ENCODE measurements at regions of chr1 and their contacts with region 1.

Region 1: DNA sequence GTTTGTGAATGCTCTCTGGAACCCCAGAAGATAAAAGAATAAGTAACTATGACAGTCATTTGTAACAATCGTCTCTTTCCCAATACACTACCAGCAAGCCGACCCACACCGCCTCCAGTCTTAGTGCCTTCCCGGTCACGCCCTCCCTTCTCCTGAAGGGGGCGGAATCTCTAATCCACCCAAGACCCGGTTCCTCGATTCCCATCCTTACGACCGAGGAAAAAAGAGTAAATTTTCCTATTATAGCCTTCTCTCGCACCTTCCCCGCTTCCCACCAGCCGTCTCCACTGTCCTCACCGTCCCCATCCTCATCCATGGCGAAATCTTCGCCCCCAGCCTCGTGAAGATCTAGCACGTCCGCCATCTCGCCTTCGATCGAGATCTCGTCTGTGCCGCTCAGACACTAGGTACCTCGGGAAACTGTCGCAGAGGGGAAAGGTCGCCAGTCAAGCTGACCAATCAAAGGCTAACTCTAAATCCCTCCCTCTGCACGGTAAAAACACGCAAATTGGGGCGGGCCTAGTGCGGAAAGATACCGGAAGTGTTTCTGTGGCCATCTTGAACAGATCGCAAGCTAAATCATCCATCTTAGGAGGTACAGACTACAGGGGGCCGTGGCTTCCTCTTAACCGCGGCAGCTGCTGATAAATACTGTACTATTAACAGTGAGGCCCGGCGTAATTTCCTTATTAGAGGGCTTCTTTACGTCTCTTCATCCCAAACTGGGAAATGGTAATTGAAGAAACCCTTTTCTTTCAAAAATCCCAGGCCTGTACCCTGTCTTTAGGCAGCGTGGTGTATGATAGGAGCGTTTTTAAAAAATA is at the start of gene RBM8A:
- DNase-seq: peak; percentile 97
- H3K4me3 Mint-ChIP-seq: no peak within 1 kb of the TSS
- H3K27ac Mint-ChIP-seq: no peak within 1 kb of the TSS
- H3K4me1 Mint-ChIP-seq: peaks cover 25% of the 10 kb centered on the region
- H3K27me3 Mint-ChIP-seq: no peaks in the 10 kb centered on the region
- total RNA-seq, gene RBM8A: 275 to 277 TPM

Region 2: DNA sequence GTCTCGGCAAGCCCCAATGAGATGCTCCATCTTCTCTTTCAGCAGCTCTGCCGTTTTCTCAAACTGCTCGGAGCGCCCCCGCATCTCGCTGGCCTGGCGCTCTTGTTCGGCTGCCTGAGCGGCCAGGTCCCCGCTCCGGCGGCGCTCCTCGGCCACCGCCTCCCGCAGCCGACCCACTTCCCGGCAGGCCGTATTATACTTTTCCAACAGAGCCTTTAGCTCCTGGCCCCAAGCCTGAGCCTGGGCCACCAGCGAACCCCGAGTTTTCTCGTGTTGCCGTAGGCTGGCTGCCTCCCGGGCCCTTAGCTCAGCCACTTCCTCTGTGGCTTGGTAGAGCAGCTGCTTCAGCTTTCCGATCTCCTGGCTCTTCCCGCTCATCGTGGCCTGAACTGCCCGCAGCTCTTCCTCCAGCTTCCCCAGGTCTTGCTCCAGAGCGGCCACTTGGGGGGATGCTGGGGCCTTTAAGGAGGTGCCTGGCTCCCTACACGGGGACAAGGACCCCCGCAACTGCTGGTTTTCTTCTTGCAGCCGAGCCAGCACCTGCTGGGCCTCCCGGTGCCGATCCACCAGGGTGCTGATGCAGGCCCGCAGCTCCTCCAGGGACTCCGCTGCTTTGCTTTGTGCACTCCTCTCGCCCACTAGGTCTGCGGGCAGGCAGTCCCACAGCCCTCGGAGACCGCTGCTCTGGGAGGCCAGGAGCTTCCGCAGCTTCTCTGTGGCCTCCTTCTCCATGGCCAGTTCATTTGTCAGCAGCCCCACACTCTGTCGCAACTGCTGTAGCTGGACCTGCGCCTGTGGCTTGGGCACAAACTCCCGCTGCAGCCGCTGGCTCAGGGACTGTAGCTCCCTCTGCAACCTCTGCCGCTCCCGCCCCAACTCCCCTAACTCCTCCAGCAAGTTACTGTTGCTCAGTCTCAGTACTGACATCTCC is 55.0 kb before region 1 on chr1:
- CTCF ChIA-PET with region 1: no interaction called
- POLR2A ChIA-PET with region 1: no interaction called
- intact Hi-C with region 1: no loop called
- DNase-seq: peak; percentile 50
- H3K4me3 Mint-ChIP-seq: peak overlapping the region; percentile 70
- H3K27ac Mint-ChIP-seq: no peak overlapping the region
- H3K4me1 Mint-ChIP-seq: peaks cover 14% of the 10 kb centered on the region
- H3K27me3 Mint-ChIP-seq: no peaks in the 10 kb centered on the region

Region 3: DNA sequence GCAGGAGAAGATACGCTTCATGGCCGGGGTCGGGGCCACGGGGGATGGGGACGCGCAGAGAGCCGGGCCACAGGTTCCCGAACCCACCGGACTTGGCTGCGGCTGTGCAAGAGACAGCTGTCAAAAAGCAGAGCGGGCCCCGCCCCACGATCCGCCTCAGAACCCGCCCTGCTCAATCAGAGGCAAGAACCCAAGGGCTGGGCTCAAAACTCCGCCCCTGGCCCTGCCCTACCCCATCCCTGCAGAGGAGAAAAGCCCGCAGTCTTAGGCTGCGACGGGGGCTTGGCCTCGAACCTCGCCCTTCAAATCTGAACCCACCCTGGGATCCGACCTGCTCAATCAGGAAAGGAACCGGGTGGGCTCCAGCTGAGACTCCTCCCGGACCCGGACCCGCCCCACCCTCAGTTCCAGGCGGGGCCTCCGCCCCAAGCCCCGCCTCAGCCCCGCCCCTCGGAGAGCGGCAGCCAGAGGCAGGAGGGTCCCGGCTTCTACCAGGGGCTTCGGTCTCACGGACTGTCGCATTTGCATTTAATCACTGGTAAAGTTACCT is 41.5 kb before region 1 on chr1 and contains the start of gene ANKRD35:
- CTCF ChIA-PET with region 1: no interaction called
- POLR2A ChIA-PET with region 1: no interaction called
- intact Hi-C with region 1: no loop called
- DNase-seq: peak; percentile 92
- H3K4me3 Mint-ChIP-seq: peak within 1 kb of the TSS; percentile 78
- H3K27ac Mint-ChIP-seq: no peak within 1 kb of the TSS
- H3K4me1 Mint-ChIP-seq: peaks cover 19% of the 10 kb centered on the region
- H3K27me3 Mint-ChIP-seq: peaks cover 18% of the 10 kb centered on the region
- total RNA-seq, gene ANKRD35: 0.24 to 0.36 TPM

Region 4: GRCh38 chr1:145898756-145899155 is 28.5 kb before region 1 on chr1:
- CTCF ChIA-PET with region 1: no interaction called
- POLR2A ChIA-PET with region 1: no interaction called
- intact Hi-C with region 1: no loop called
- DNase-seq: no peak
- H3K4me3 Mint-ChIP-seq: no peak overlapping the region
- H3K27ac Mint-ChIP-seq: no peak overlapping the region
- H3K4me1 Mint-ChIP-seq: no peaks in the 10 kb centered on the region
- H3K27me3 Mint-ChIP-seq: no peaks in the 10 kb centered on the region

Region 5: GRCh38 chr1:145957443-145958319 is 30.4 kb after region 1 on chr1 and contains the start of gene LIX1L:
- CTCF ChIA-PET with region 1: interaction called, 26 read pairs
- POLR2A ChIA-PET with region 1: interaction called, 62 read pairs
- intact Hi-C with region 1: loop called (anchors 2 kb)
- DNase-seq: peak; percentile 97
- H3K4me3 Mint-ChIP-seq: peak within 1 kb of the TSS; percentile 87
- H3K27ac Mint-ChIP-seq: peak within 1 kb of the TSS; percentile 79
- H3K4me1 Mint-ChIP-seq: peaks cover 57% of the 10 kb centered on the region
- H3K27me3 Mint-ChIP-seq: no peaks in the 10 kb centered on the region
- total RNA-seq, gene LIX1L: 46.6 to 47.8 TPM

Region 6: GRCh38 chr1:145963995-145964901 is 37.0 kb after region 1 on chr1 and contains the starts of genes ANKRD34A and POLR3GL:
- CTCF ChIA-PET with region 1: interaction called, 26 read pairs
- POLR2A ChIA-PET with region 1: interaction called, 62 read pairs
- intact Hi-C with region 1: no loop called
- DNase-seq: peak; percentile 96
- H3K4me3 Mint-ChIP-seq: peak within 1 kb of the TSS; percentile 98
- H3K27ac Mint-ChIP-seq: peak within 1 kb of the TSS; percentile 95
- H3K4me1 Mint-ChIP-seq: peaks cover 31% of the 10 kb centered on the region
- H3K27me3 Mint-ChIP-seq: no peaks in the 10 kb centered on the region
- total RNA-seq, gene ANKRD34A: 4.6 to 4.7 TPM
- total RNA-seq, gene POLR3GL: 27.3 to 30.9 TPM

Region 7: GRCh38 chr1:146049436-146049835 is 122.2 kb after region 1 on chr1:
- CTCF ChIA-PET with region 1: no interaction called
- POLR2A ChIA-PET with region 1: interaction called, 12 read pairs
- intact Hi-C with region 1: no loop called
- DNase-seq: peak; percentile 31
- H3K4me3 Mint-ChIP-seq: no peak overlapping the region
- H3K27ac Mint-ChIP-seq: no peak overlapping the region
- H3K4me1 Mint-ChIP-seq: peaks cover 32% of the 10 kb centered on the region
- H3K27me3 Mint-ChIP-seq: no peaks in the 10 kb centered on the region

Measured in activated CD4-positive, alpha-beta memory T cell treated with anti-CD3 and anti-CD28 coated beads for 36 hours (primary cell).